A549 (cell line): ENCODE measurements at regions of chr1 and their contacts with region 1.

Region 1: GRCh38 chr1:156445789-156446263 is 54.7 kb downstream of the MEF2D start:
- DNase-seq: peak; percentile 87 to 90
- ATAC-seq: peak; percentile 92 to 95
- H3K4me3 ChIP-seq: no peak overlapping the region
- H3K27ac ChIP-seq: peak overlapping the region; percentile 54 to 71; a peak in 5 of 6 replicates
- H3K4me1 ChIP-seq: 0 out of 3 replicates have a peak, but pooled peaks cover 3% of the 10 kb centered on the region
- CTCF ChIP-seq: peak; percentile 92
- EP300 ChIP-seq: no peak
- POLR2A ChIP-seq: no peak
- RAD21 ChIP-seq: peak; percentile 92 to 96

Region 2: GRCh38 chr1:156012051-156012817 is 433.6 kb before region 1 on chr1:
- CTCF ChIA-PET with region 1: no interaction called
- POLR2A ChIA-PET with region 1: no interaction called
- DNase-seq: no peak
- ATAC-seq: peak; percentile 32 to 45; a peak in 3 of 6 replicates
- H3K4me3 ChIP-seq: no peak overlapping the region
- H3K27ac ChIP-seq: no peak overlapping the region
- H3K4me1 ChIP-seq: peaks cover 7% of the 10 kb centered on the region; the same call in 2 of the 3 replicates
- CTCF ChIP-seq: no peak
- EP300 ChIP-seq: no peak
- POLR2A ChIP-seq: no peak
- RAD21 ChIP-seq: no peak

Region 3: DNA sequence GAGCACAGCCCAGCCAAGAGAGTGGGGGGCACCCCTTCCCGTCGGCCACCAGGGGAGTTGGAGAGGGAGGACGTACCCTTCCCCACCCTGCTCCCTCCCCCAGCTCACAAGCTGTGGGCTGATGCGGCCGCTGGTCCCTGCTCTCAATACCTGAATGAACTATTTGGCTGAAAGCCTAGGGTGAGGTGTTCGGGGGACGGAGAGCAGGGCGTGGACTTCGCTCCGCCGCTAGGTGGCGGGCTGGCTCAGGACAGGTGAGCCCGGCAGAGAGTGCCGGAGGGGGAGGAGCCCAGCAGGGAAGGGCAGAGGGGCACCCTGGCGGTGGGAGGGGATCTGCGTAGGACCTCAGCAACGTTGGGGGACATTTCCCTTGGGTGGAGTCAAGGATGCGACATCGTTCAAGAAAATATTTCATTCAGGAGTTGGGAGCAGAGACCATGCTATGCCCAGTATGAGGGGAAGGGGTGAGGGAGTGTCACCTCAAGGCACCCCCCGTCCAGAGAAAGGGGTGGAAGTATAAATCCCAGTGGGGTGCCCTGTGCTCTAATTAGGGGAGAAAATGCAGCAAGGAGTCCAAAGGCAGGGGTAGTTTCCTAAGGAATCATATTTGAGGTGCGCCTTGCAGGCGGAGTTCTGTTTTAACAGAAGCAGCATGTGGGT is 88.8 kb before region 1 on chr1:
- CTCF ChIA-PET with region 1: interaction called, 38 read pairs
- POLR2A ChIA-PET with region 1: no interaction called
- DNase-seq: peak; percentile 63 to 83
- ATAC-seq: peak; percentile 93 to 94
- H3K4me3 ChIP-seq: no peak overlapping the region; the same call in 2 of the 3 replicates
- H3K27ac ChIP-seq: no peak overlapping the region; a peak in 1 of 6 replicates
- H3K4me1 ChIP-seq: no peaks in the 10 kb centered on the region; the same call in 2 of the 3 replicates
- CTCF ChIP-seq: peak; percentile 82
- EP300 ChIP-seq: no peak
- POLR2A ChIP-seq: no peak
- RAD21 ChIP-seq: peak; percentile 61 to 66

Region 4: DNA sequence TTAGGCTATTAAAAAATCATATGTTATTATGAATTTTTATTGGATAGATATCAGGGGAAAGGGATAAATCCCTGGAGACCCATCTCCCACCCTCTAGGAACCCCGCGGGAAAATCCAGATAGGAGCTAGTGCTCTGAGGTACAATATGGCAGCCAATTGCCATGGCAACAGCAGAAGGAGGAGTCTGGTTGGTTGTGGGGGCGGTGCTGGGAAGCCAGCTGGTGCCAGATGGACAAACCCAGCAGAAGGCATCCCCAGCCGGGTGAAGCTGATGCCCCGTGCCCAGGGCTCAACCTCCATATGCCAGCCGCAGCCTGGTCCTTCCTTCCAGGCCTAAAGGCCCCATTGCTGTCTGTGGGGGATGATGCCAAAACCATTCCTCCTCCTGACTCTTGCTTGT is 38.5 kb before region 1 on chr1:
- CTCF ChIA-PET with region 1: interaction called, 26 read pairs
- POLR2A ChIA-PET with region 1: no interaction called
- DNase-seq: no peak
- ATAC-seq: peak in 1 of 2 experiments; percentile 13; a peak in 1 of 6 replicates
- H3K4me3 ChIP-seq: no peak overlapping the region
- H3K27ac ChIP-seq: no peak overlapping the region
- H3K4me1 ChIP-seq: no peaks in the 10 kb centered on the region
- CTCF ChIP-seq: no peak
- EP300 ChIP-seq: no peak
- POLR2A ChIP-seq: no peak
- RAD21 ChIP-seq: no peak

Region 5: DNA sequence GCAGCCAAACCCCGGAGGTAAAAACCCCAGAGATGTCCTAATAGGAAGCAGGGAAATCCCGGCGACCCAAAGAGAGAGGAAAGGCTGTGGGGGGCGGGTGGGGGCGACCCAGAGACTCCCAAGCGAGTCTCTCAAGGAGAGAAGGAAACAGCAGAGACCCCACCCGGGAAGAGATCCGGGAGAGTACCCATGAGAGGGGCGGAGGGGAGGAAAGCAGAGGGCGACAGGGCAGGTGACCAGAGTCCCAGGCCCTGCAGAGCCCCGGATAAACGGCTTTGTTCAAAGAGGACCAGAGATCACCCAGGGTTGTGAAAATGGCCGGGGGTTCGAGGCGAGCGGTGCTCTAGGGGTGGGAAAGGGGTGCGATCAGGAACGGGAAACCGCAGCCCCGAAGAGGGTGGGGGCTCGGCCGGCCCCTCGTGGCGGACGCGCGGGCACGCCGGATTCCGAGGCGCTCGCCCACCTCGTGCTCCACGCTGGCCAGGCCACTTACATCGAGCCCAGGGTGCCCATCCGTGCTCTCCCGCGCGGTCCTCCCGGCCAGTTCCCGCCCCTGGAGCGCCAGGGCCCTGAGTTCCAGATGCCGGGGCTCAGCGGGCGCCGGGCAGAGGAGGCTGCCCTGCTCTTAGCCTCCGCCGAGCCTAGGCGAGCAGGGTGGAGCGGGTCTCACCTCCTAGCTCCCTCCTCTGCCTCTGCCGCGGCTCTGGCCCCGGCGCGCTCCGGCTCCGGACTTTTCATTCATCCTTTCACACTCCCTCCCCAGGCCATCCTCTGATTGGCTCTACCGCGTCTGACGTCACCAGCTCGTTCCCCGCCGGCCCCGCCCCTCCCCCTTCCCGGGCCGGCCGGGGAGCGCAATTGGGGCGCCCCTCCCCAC is 24.5 kb before region 1 on chr1:
- CTCF ChIA-PET with region 1: interaction called, 29 read pairs
- POLR2A ChIA-PET with region 1: no interaction called
- DNase-seq: peak; percentile 83 to 98
- ATAC-seq: peak; percentile 94 to 97
- H3K4me3 ChIP-seq: peak overlapping the region; percentile 61
- H3K27ac ChIP-seq: peak overlapping the region; percentile 67 to 83; a peak in 5 of 6 replicates
- H3K4me1 ChIP-seq: peaks cover 12% of the 10 kb centered on the region
- CTCF ChIP-seq: no peak
- EP300 ChIP-seq: no peak
- POLR2A ChIP-seq: peak; percentile 81
- RAD21 ChIP-seq: no peak

Region 6: GRCh38 chr1:156435545-156436141 is 10.2 kb before region 1 on chr1:
- CTCF ChIA-PET with region 1: interaction called, 67 read pairs
- POLR2A ChIA-PET with region 1: no interaction called
- DNase-seq: no peak
- ATAC-seq: no peak
- H3K4me3 ChIP-seq: peak overlapping the region; percentile 25; the same call in 2 of the 3 replicates
- H3K27ac ChIP-seq: peak overlapping the region in 1 of 2 experiments; percentile 26; a peak in 1 of 6 replicates
- H3K4me1 ChIP-seq: no peaks in the 10 kb centered on the region
- CTCF ChIP-seq: no peak
- EP300 ChIP-seq: no peak
- POLR2A ChIP-seq: no peak
- RAD21 ChIP-seq: no peak

Region 7: GRCh38 chr1:156500797-156501499 is 55.1 kb after region 1 on chr1:
- CTCF ChIA-PET with region 1: interaction called, 18 read pairs
- POLR2A ChIA-PET with region 1: interaction called, 3 read pairs
- DNase-seq: peak; percentile 91 to 98
- ATAC-seq: peak; percentile 58 to 70
- H3K4me3 ChIP-seq: peak overlapping the region; percentile 98
- H3K27ac ChIP-seq: peak overlapping the region; percentile 98 to 100
- H3K4me1 ChIP-seq: peaks cover 70% of the 10 kb centered on the region
- CTCF ChIP-seq: peak; percentile 55
- EP300 ChIP-seq: peak in 1 of 2 experiments; percentile 32; a peak in 1 of 5 replicates
- POLR2A ChIP-seq: peak; percentile 57
- RAD21 ChIP-seq: peak in 1 of 2 experiments; percentile 31; a peak in 2 of 5 replicates

Region 8: GRCh38 chr1:156515956-156516355 is 70.1 kb after region 1 on chr1:
- CTCF ChIA-PET with region 1: no interaction called
- POLR2A ChIA-PET with region 1: no interaction called
- DNase-seq: no peak
- ATAC-seq: no peak
- H3K4me3 ChIP-seq: no peak overlapping the region
- H3K27ac ChIP-seq: no peak overlapping the region
- H3K4me1 ChIP-seq: peaks cover 27% of the 10 kb centered on the region
- CTCF ChIP-seq: no peak
- EP300 ChIP-seq: no peak
- POLR2A ChIP-seq: no peak
- RAD21 ChIP-seq: no peak